ENCODE measurements at regions of chr3 and their contacts with region 1.

Region 1: GRCh38 chr3:181700168-181701087 is 11.3 kb upstream of the SOX2 start:
- DNase-seq: peak; percentile 78
- ATAC-seq: peak; percentile 23
- H3K4me3 Mint-ChIP-seq: peak overlapping the region; percentile 61
- H3K27ac Mint-ChIP-seq: peak overlapping the region; percentile 82
- H3K4me1 Mint-ChIP-seq: peaks cover 86% of the 10 kb centered on the region
- H3K27me3 Mint-ChIP-seq: peaks cover 57% of the 10 kb centered on the region
- CTCF ChIP-seq: peak; percentile 85

Region 2: DNA sequence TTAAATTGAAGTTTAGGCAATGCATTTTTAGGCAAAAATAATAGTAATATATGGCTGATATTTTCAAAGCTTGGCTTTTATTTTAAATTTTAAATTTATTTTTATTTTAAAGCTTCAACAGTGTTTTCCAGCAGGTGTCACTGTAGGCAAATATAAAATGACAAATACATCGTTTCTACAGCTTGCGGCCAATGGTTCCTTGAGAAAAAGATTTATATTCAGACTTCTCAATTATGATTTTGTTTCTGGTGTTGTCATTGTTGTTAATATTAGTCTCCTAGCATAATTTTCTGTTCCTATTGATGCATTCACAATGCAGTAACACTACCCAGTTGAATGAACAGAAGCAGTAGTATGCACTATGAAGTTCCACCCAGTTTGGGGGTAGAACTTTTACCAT is 490.2 kb before region 1 on chr3:
- CTCF ChIA-PET with region 1: interaction called, 12 read pairs
- POLR2A ChIA-PET with region 1: no interaction called
- DNase-seq: no peak
- ATAC-seq: no peak
- H3K4me3 Mint-ChIP-seq: no peak overlapping the region
- H3K27ac Mint-ChIP-seq: no peak overlapping the region
- H3K4me1 Mint-ChIP-seq: no peaks in the 10 kb centered on the region
- H3K27me3 Mint-ChIP-seq: no peaks in the 10 kb centered on the region
- CTCF ChIP-seq: no peak

Region 3: GRCh38 chr3:181326637-181327223 is 373.7 kb before region 1 on chr3:
- CTCF ChIA-PET with region 1: interaction called, 26 read pairs
- POLR2A ChIA-PET with region 1: no interaction called
- DNase-seq: no peak
- ATAC-seq: peak; percentile 55; the same call in 1 of the 2 replicates
- H3K4me3 Mint-ChIP-seq: no peak overlapping the region
- H3K27ac Mint-ChIP-seq: no peak overlapping the region
- H3K4me1 Mint-ChIP-seq: peaks cover 20% of the 10 kb centered on the region
- H3K27me3 Mint-ChIP-seq: no peaks in the 10 kb centered on the region
- CTCF ChIP-seq: peak; percentile 62

Region 4: GRCh38 chr3:181610083-181610972 is 90.1 kb before region 1 on chr3:
- CTCF ChIA-PET with region 1: interaction called, 11 read pairs
- POLR2A ChIA-PET with region 1: no interaction called
- DNase-seq: no peak
- ATAC-seq: peak; percentile 79
- H3K4me3 Mint-ChIP-seq: no peak overlapping the region; the same call in 1 of the 2 replicates
- H3K27ac Mint-ChIP-seq: peak overlapping the region; percentile 20
- H3K4me1 Mint-ChIP-seq: peaks cover 33% of the 10 kb centered on the region
- H3K27me3 Mint-ChIP-seq: no peaks in the 10 kb centered on the region
- CTCF ChIP-seq: no peak

Region 5: DNA sequence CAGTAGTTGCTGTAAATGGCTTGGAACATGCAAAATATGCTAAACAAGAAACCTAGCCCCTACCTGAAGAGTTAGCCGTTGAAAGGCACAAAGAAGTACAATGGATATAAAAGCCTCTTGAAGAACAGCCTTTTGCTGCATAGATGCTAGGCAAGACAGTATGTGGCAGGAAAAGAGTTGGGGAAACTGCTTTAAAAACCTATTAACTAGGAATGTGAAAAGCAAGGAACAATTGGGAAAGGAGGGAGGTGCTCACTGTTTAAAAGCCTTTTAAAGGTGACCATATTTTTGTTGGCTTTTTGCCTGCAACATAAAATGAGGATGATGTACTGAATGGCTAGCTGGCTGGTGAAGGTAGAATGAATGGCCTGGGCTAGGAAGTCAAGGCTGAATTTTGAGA is 13.2 kb before region 1 on chr3:
- CTCF ChIA-PET with region 1: interaction called, 30 read pairs
- POLR2A ChIA-PET with region 1: no interaction called
- DNase-seq: no peak
- ATAC-seq: peak; percentile 80
- H3K4me3 Mint-ChIP-seq: no peak overlapping the region
- H3K27ac Mint-ChIP-seq: peak overlapping the region; percentile 40
- H3K4me1 Mint-ChIP-seq: peaks cover 47% of the 10 kb centered on the region
- H3K27me3 Mint-ChIP-seq: no peaks in the 10 kb centered on the region
- CTCF ChIP-seq: no peak

Region 6: GRCh38 chr3:181711325-181712135 is 11.1 kb after region 1 on chr3 and contains the start of gene SOX2:
- CTCF ChIA-PET with region 1: interaction called, 11 read pairs
- POLR2A ChIA-PET with region 1: no interaction called
- DNase-seq: peak; percentile 88
- ATAC-seq: peak; percentile 54
- H3K4me3 Mint-ChIP-seq: no peak within 1 kb of the TSS; the same call in 1 of the 2 replicates
- H3K27ac Mint-ChIP-seq: peak within 1 kb of the TSS; percentile 98
- H3K4me1 Mint-ChIP-seq: peaks cover 35% of the 10 kb centered on the region
- H3K27me3 Mint-ChIP-seq: peaks cover 4% of the 10 kb centered on the region; the same call in 1 of the 2 replicates
- CTCF ChIP-seq: no peak
- total RNA-seq, gene SOX2: 189 to 245 TPM (median 239 TPM) in 3 replicates

Measured in WTC11 (cell line).